ENCODE measurements at regions of chr7 and their contacts with region 1.

Region 1: DNA sequence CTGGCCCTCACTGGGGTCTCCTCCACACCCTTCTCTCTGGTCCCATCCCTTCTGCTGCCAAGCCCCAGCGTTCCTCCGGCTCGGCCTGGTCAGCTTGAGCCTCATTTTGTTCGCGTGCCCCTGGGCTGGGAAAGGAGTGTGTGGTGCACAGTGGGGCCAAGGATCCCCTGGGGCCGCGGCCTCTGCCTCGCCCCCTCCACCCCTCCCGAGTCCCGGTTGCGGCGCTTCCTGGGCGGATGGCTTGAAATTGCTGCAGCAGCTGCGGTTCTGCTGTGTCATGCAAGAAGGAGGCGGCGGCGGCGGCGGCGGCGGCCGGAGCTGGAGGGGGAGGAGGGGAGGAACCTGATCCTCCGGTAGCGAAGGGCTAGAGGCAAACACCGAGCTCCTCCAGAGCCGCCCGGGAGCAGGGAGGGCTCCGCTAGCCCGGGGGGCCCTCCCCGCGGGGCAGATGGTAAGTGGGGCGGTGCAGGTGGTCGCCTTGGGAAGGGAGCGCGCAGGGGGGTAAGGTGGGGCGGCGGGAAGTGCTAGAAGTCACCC is 217.9 kb upstream of the MKLN1 start:
- DNase-seq: peak; percentile 19 to 97 (median 70)
- ATAC-seq: peak; percentile 39
- H3K4me3 ChIP-seq: peak overlapping the region; percentile 48 to 97
- H3K27ac ChIP-seq: peak overlapping the region; percentile 98 to 99
- H3K4me1 ChIP-seq: peaks cover 23 to 50% of the 10 kb centered on the region in 2 donors
- H3K27me3 ChIP-seq: no peaks in the 10 kb centered on the region
- CTCF ChIP-seq: no peak

Region 2: DNA sequence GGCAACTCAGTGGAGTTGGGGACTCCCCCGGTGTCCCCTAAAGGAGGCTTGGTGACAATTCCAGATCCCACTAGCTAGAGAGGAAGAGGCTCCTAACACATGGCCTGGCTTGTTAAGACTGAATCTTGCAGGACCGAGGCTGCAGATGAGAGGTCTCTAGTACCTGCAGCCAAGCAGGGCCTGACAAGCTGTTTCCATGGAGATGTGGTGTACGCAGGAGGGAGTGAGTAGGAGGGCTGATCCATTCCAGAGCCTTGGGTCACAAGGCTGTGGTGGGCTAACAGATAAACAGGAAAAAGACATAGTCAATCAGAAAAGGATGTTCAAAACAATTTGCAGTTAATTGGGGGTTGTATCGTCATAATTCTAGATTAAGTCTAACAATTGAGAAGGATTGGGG is 140.5 kb after region 1 on chr7:
- intact Hi-C with region 1: no loop called
- DNase-seq: no peak
- ATAC-seq: no peak
- H3K4me3 ChIP-seq: no peak overlapping the region
- H3K27ac ChIP-seq: no peak overlapping the region
- H3K4me1 ChIP-seq: peaks cover 0 to 3% of the 10 kb centered on the region in 2 donors
- H3K27me3 ChIP-seq: no peaks in the 10 kb centered on the region
- CTCF ChIP-seq: no peak

Region 3: GRCh38 chr7:131327626-131328376 is 218.0 kb after region 1 on chr7 and contains the start of gene MKLN1:
- intact Hi-C with region 1: loop called in 1 of 2 experiments (anchors 10 kb)
- DNase-seq: peak; percentile 86 to 99 (median 94)
- ATAC-seq: peak; percentile 99
- H3K4me3 ChIP-seq: peak within 1 kb of the TSS; percentile 71 to 76
- H3K27ac ChIP-seq: peak within 1 kb of the TSS; percentile 97
- H3K4me1 ChIP-seq: peaks cover 6 to 51% of the 10 kb centered on the region in 2 donors
- H3K27me3 ChIP-seq: no peaks in the 10 kb centered on the region
- CTCF ChIP-seq: no peak
- polyA plus RNA-seq, gene MKLN1: 38.7 to 48.2 (median 42.8) TPM

Measured in left lung (tissue), 14 donors.